ENCODE measurements at regions of chr7 and their contacts with region 1.

Region 1: GRCh38 chr7:992709-993607 is 10.0 kb downstream of the CYP2W1 start:
- DNase-seq: peak; percentile 88
- ATAC-seq: peak; percentile 96
- H3K4me3 Mint-ChIP-seq: no peak overlapping the region
- H3K27ac Mint-ChIP-seq: no peak overlapping the region
- H3K4me1 Mint-ChIP-seq: peaks cover 11% of the 10 kb centered on the region
- H3K27me3 Mint-ChIP-seq: no peaks in the 10 kb centered on the region
- CTCF ChIP-seq: peak; percentile 89

Region 2: GRCh38 chr7:901381-902154 is 91.4 kb before region 1 on chr7:
- CTCF ChIA-PET with region 1: no interaction called
- POLR2A ChIA-PET with region 1: no interaction called
- intact Hi-C with region 1: no loop called
- DNase-seq: no peak
- ATAC-seq: peak; percentile 78
- H3K4me3 Mint-ChIP-seq: no peak overlapping the region
- H3K27ac Mint-ChIP-seq: no peak overlapping the region
- H3K4me1 Mint-ChIP-seq: peaks cover 2% of the 10 kb centered on the region
- H3K27me3 Mint-ChIP-seq: peaks cover 2% of the 10 kb centered on the region
- CTCF ChIP-seq: no peak

Region 3: DNA sequence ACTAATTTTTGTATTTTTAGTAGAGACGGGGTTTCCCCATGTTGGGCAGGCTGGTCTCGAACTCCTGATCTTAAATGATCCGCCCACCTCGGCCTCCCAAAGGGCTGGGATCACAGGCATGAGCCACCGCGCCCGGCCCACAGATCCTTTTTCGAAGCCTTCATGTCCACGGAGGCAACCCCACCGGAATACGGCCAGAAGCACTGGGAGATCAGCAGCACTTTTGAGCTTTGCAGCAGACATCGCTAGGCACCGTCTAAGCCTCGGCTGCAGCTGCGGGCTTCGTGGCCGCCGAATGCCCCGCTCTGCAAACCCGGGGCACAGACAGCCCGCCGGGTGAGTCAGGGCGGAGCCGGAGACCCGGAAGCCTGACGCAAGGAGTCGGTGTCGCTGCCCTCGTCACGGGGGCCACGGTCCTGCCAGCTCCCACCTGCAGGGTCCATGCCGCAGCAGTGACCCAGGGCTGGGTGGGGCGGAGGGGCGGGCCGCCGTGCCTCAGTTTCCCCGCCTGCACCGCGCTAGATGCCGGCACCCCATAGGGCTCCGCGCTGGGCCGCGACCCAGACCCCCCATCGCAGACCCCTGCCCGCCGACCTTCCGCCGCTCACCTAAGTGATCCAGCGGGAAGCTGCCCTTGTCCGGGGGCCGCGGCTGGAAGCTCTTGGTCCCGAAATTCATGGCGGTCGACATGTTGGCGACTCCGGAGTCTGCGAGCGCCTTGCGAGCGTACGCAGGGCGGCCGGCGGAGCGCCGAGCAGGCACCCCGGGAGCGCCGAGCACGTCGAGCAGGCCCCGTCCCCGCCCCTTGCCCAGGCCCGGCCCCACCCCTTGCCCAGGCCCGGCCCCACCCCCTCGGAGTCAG is 17.9 kb before region 1 on chr7 and contains the start of gene COX19:
- CTCF ChIA-PET with region 1: interaction called, 7 read pairs
- POLR2A ChIA-PET with region 1: interaction called, 22 read pairs
- intact Hi-C with region 1: no loop called
- DNase-seq: peak; percentile 92
- ATAC-seq: peak; percentile 84
- H3K4me3 Mint-ChIP-seq: peak within 1 kb of the TSS; percentile 91
- H3K27ac Mint-ChIP-seq: peak within 1 kb of the TSS; percentile 86
- H3K4me1 Mint-ChIP-seq: peaks cover 33% of the 10 kb centered on the region
- H3K27me3 Mint-ChIP-seq: no peaks in the 10 kb centered on the region
- CTCF ChIP-seq: no peak
- total RNA-seq, gene COX19: 21.2 and 24.5 TPM in 2 replicates

Region 4: GRCh38 chr7:1028031-1028770 is 35.2 kb after region 1 on chr7:
- CTCF ChIA-PET with region 1: interaction called, 31 read pairs
- POLR2A ChIA-PET with region 1: interaction called, 35 read pairs
- intact Hi-C with region 1: loop called (anchors 5 kb)
- DNase-seq: peak; percentile 85
- ATAC-seq: peak; percentile 38
- H3K4me3 Mint-ChIP-seq: peak overlapping the region; percentile 91
- H3K27ac Mint-ChIP-seq: no peak overlapping the region
- H3K4me1 Mint-ChIP-seq: peaks cover 61% of the 10 kb centered on the region
- H3K27me3 Mint-ChIP-seq: no peaks in the 10 kb centered on the region
- CTCF ChIP-seq: no peak

Region 5: GRCh38 chr7:1065263-1066260 is 72.6 kb after region 1 on chr7:
- CTCF ChIA-PET with region 1: interaction called, 331 read pairs
- POLR2A ChIA-PET with region 1: interaction called, 76 read pairs
- intact Hi-C with region 1: loop called (anchors 1 kb)
- DNase-seq: peak; percentile 83
- ATAC-seq: peak; percentile 73
- H3K4me3 Mint-ChIP-seq: peak overlapping the region; percentile 73
- H3K27ac Mint-ChIP-seq: no peak overlapping the region
- H3K4me1 Mint-ChIP-seq: peaks cover 43% of the 10 kb centered on the region
- H3K27me3 Mint-ChIP-seq: peaks cover 5% of the 10 kb centered on the region
- CTCF ChIP-seq: peak; percentile 67

Region 6: DNA sequence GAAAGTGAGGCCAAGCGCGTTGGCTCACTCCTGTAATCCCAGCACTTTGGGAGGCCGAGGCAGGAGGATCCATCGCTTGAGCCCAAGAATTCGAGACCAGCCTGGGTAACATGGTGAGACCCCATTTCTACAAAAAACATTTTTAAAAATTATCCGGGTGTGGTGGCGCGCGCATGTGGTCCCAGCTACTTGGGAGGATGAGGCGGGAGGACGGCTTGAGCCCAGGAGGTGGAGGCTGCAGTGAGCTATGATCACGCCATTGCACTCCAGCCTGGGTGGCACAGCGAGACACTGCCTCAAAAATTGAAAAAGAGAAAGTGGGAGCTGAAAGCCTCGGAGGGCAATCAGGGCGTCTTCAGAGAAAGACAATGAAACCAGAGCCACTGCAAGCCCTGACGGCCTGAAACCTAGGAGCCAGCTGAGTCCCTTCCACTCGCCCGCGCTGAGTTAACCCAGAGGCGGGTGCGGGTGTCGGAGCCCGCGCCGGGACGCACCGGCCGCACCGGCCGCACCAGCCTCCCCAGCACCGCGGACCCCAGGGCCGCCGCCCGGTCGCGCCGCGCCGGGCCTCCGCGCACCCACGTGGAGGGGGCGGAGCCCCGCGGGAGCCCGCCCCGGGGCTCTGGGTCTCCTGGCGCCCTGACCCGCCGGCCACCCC is 144.7 kb after region 1 on chr7:
- CTCF ChIA-PET with region 1: interaction called, 59 read pairs
- POLR2A ChIA-PET with region 1: interaction called, 4 read pairs
- intact Hi-C with region 1: loop called (anchors 5 kb)
- DNase-seq: no peak
- ATAC-seq: peak; percentile 62
- H3K4me3 Mint-ChIP-seq: peak overlapping the region; percentile 86
- H3K27ac Mint-ChIP-seq: peak overlapping the region; percentile 70
- H3K4me1 Mint-ChIP-seq: peaks cover 52% of the 10 kb centered on the region
- H3K27me3 Mint-ChIP-seq: no peaks in the 10 kb centered on the region
- CTCF ChIP-seq: no peak

Region 7: DNA sequence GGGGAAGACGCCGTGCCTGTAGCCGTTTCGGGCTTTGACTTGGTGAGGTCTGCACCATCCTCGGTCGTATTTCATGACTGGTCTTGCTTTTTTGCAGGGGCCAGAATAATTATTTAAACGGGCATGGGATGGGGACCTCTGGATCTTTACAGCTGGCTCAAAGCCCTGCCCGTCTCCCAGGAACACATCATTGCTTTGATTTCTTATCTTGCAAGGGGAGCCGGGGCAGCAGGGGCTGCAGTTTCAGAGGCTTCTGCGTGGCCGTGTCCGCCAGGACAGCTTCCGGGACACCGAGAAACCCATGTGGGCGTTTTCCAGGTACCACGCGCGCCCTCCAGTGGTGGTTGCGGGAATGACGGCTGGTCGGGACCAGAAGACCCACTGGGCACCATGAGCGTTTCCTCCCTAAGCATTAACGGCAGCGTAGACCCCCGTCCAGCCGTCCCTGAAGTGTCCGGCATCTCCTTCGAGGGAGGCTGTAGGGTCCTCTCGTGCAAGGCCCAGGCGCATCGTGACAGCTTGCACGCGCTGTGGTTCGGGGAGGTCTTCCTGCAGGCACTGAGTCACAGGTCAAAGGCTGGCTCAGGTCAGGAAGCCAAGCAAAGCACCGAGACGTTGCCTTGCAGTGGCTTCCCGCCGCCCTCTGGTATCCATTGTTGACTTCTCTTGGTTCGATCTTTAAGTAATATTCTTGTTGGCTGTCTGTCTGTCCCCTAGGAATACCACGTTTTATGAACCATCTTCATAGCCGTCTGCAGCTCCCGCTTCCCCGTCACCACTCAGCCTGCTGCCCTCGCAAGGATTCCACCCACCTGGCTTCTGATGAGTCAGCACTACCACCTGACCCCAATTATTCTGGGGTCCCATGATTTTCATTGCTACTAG is 183.3 kb after region 1 on chr7:
- CTCF ChIA-PET with region 1: interaction called, 59 read pairs
- POLR2A ChIA-PET with region 1: interaction called, 3 read pairs
- intact Hi-C with region 1: loop called (anchors 1 kb)
- DNase-seq: peak; percentile 85
- ATAC-seq: peak; percentile 80
- H3K4me3 Mint-ChIP-seq: peak overlapping the region; percentile 11
- H3K27ac Mint-ChIP-seq: no peak overlapping the region
- H3K4me1 Mint-ChIP-seq: peaks cover 11% of the 10 kb centered on the region
- H3K27me3 Mint-ChIP-seq: peaks cover 15% of the 10 kb centered on the region
- CTCF ChIP-seq: peak; percentile 78

Region 8: GRCh38 chr7:2373124-2373556 is 1380.2 kb after region 1 on chr7:
- CTCF ChIA-PET with region 1: no interaction called
- POLR2A ChIA-PET with region 1: no interaction called
- intact Hi-C with region 1: no loop called
- DNase-seq: no peak
- ATAC-seq: no peak
- H3K4me3 Mint-ChIP-seq: no peak overlapping the region
- H3K27ac Mint-ChIP-seq: no peak overlapping the region
- H3K4me1 Mint-ChIP-seq: peaks cover 2% of the 10 kb centered on the region
- H3K27me3 Mint-ChIP-seq: no peaks in the 10 kb centered on the region
- CTCF ChIP-seq: no peak

Measured in activated B cell treated with CpG ODN at 0.5 μM for 24 hours (primary cell).